ENCODE measurements at regions of chr10 and their contacts with region 1.

Region 1: GRCh38 chr10:35379226-35380137 is 43.2 kb downstream of the CCNY start:
- DNase-seq: peak; percentile 90
- ATAC-seq: peak; percentile 95
- H3K4me3 ChIP-seq: peak overlapping the region in 4 of 5 experiments; percentile 16 to 42 (median 22)
- H3K4me3 Mint-ChIP-seq: peak overlapping the region; percentile 79
- H3K27ac ChIP-seq: peak overlapping the region; percentile 73 to 84
- H3K27ac Mint-ChIP-seq: peak overlapping the region; percentile 91
- H3K4me1 ChIP-seq: peaks cover 32 to 35% of the 10 kb centered on the region in 2 donors
- H3K4me1 Mint-ChIP-seq: peaks cover 65% of the 10 kb centered on the region
- H3K27me3 ChIP-seq: no peaks in the 10 kb centered on the region
- H3K27me3 Mint-ChIP-seq: no peaks in the 10 kb centered on the region
- CTCF ChIP-seq: peak; percentile 73

Region 2: GRCh38 chr10:35090162-35090954 is 289.1 kb before region 1 on chr10 and contains the start of gene CUL2:
- CTCF ChIA-PET with region 1: no interaction called
- POLR2A ChIA-PET with region 1: no interaction called
- intact Hi-C with region 1: loop called (anchors 1 kb)
- DNase-seq: peak; percentile 98
- ATAC-seq: peak; percentile 95
- H3K4me3 ChIP-seq: peak within 1 kb of the TSS; percentile 62 to 92 (median 80)
- H3K4me3 Mint-ChIP-seq: peak within 1 kb of the TSS; percentile 89
- H3K27ac ChIP-seq: peak within 1 kb of the TSS; percentile 95 to 98
- H3K27ac Mint-ChIP-seq: peak within 1 kb of the TSS; percentile 95
- H3K4me1 ChIP-seq: peaks cover 29 to 31% of the 10 kb centered on the region in 2 donors
- H3K4me1 Mint-ChIP-seq: peaks cover 50% of the 10 kb centered on the region
- H3K27me3 ChIP-seq: no peaks in the 10 kb centered on the region
- H3K27me3 Mint-ChIP-seq: no peaks in the 10 kb centered on the region
- CTCF ChIP-seq: no peak
- total RNA-seq, gene CUL2: 36.9 and 41.9 TPM in 2 replicates

Region 3: DNA sequence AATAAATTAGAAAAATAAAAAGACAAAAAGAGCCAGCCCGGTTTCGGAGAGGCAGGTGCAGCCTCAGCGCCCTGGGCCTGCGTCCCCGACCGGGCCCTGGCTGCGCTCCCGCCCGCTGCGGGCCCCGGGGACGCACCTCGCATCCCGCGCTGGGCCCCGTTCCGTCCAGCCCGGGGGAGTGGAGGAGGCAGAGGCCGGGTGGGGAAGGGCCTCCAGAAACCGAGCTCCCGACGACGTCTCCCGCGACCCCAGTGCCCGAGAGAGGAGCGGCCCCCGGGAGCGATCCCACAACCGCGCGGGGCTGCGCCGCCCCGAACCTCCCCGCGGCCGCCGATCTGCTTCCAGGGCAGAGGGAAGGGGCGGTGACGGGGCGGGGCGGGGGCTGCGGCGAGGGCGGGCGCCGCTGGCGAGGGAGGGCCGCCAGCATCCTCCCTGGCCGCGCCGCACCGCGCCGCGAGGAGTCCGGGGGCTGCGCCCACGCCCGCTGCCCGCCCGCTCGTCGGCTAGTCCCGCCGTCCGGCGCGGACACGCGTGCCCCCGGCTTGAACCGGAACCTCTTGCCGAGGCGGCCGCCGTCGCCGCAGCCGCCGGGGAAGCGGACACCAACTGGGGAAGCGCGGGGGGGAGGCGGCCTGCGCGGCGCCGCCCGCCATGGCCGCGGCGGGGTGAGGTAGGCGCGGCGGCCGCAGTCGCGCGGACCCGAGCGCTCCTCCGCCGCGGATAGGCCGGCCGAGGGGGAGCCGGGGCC is 43.2 kb before region 1 on chr10 and contains the start of gene CCNY:
- CTCF ChIA-PET with region 1: interaction called, 4 read pairs
- POLR2A ChIA-PET with region 1: no interaction called
- intact Hi-C with region 1: loop called (anchors 1 kb)
- DNase-seq: peak; percentile 83
- ATAC-seq: peak; percentile 87
- H3K4me3 ChIP-seq: peak within 1 kb of the TSS; percentile 50 to 90 (median 74)
- H3K4me3 Mint-ChIP-seq: peak within 1 kb of the TSS; percentile 87
- H3K27ac ChIP-seq: peak within 1 kb of the TSS; percentile 43 to 77
- H3K27ac Mint-ChIP-seq: peak within 1 kb of the TSS; percentile 82
- H3K4me1 ChIP-seq: peaks cover 34% of the 10 kb centered on the region in 2 donors
- H3K4me1 Mint-ChIP-seq: peaks cover 56% of the 10 kb centered on the region
- H3K27me3 ChIP-seq: no peaks in the 10 kb centered on the region
- H3K27me3 Mint-ChIP-seq: no peaks in the 10 kb centered on the region
- CTCF ChIP-seq: no peak
- total RNA-seq, gene CCNY: 61.7 and 64.9 TPM in 2 replicates

Region 4: DNA sequence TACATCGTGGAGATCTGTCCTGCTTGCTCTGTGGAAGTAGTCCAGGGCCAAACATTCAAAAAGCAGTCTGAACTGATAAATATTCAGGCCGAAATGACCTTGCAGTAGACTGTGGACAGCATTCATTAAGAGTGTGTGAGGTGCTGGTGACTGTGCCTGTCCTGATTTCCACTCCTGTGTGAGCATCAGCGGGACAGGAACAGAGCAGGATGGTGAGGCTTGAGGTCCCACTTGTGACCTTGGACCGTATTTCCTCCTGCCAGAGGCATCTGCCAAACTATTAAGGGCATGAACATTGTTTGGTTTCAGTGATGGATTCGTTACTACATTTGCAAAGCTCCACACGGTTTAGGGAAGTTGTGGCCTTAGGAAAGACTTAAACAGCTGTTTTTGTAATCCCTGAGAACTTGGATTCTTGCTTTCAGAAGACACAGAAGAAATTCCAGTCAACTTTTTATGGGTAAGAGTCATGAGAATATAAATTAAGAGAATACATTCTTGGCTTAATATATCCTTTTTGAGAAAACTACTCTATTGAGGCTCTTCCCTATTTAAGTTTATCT is 10.4 kb before region 1 on chr10:
- CTCF ChIA-PET with region 1: no interaction called
- POLR2A ChIA-PET with region 1: no interaction called
- intact Hi-C with region 1: no loop called
- DNase-seq: no peak
- ATAC-seq: no peak
- H3K4me3 ChIP-seq: no peak overlapping the region
- H3K4me3 Mint-ChIP-seq: no peak overlapping the region
- H3K27ac ChIP-seq: no peak overlapping the region
- H3K27ac Mint-ChIP-seq: peak overlapping the region; percentile 37
- H3K4me1 ChIP-seq: peaks cover 42 to 51% of the 10 kb centered on the region in 2 donors
- H3K4me1 Mint-ChIP-seq: peaks cover 78% of the 10 kb centered on the region
- H3K27me3 ChIP-seq: no peaks in the 10 kb centered on the region
- H3K27me3 Mint-ChIP-seq: no peaks in the 10 kb centered on the region
- CTCF ChIP-seq: no peak

Region 5: GRCh38 chr10:35563261-35563891 is 183.9 kb after region 1 on chr10:
- CTCF ChIA-PET with region 1: interaction called, 31 read pairs
- POLR2A ChIA-PET with region 1: no interaction called
- intact Hi-C with region 1: loop called (anchors 1 kb)
- DNase-seq: peak; percentile 66
- ATAC-seq: peak; percentile 54
- H3K4me3 ChIP-seq: no peak overlapping the region
- H3K4me3 Mint-ChIP-seq: no peak overlapping the region
- H3K27ac ChIP-seq: no peak overlapping the region
- H3K27ac Mint-ChIP-seq: no peak overlapping the region
- H3K4me1 ChIP-seq: peaks cover 12 to 20% of the 10 kb centered on the region in 2 donors
- H3K4me1 Mint-ChIP-seq: peaks cover 19% of the 10 kb centered on the region
- H3K27me3 ChIP-seq: no peaks in the 10 kb centered on the region
- H3K27me3 Mint-ChIP-seq: no peaks in the 10 kb centered on the region
- CTCF ChIP-seq: peak; percentile 98

Region 6: DNA sequence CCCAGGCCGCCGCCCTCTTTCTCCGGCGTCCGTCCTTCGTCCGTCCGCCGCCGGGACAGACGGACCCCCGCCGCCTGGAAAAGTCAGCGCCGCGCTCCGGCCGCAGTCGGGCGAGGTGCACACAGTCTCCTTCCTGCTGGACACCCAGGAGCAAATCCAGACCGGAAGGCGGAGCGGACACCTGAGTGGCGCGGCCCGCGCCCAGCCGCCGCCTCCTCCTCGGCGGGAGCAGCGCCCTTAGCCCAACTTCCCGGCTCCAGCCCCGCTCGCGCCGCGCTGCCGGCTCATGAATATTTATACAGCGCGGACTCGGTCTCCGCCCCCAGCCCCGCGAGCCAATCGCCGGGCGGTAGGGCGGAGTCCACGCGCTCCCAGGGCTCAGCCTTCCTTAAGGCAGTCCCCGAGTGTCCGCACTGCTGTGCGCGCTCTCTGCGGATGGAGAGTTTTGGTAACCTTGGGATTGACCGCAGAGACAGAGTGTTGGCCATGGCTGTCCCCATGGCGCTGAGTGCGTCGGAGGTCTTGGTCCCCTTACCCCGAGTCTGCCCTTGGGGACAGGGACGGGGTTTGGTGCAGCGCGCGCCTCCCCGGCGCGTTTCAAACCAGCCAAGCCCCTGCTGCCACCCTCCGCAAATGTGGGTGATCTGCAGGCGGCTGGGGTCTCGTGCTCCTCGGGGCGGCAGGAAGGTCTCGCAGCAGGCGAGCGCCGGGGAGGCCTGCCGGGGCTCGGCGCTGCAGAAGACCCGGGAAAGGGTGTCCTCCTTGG is 262.7 kb after region 1 on chr10 and contains the start of gene FZD8:
- CTCF ChIA-PET with region 1: no interaction called
- POLR2A ChIA-PET with region 1: no interaction called
- intact Hi-C with region 1: loop called (anchors 1 kb)
- DNase-seq: peak; percentile 86
- ATAC-seq: peak; percentile 89
- H3K4me3 ChIP-seq: peak within 1 kb of the TSS; percentile 48 to 74 (median 63)
- H3K4me3 Mint-ChIP-seq: peak within 1 kb of the TSS; percentile 94
- H3K27ac ChIP-seq: no peak within 1 kb of the TSS
- H3K27ac Mint-ChIP-seq: peak within 1 kb of the TSS; percentile 47
- H3K4me1 ChIP-seq: peaks cover 22 to 29% of the 10 kb centered on the region in 2 donors
- H3K4me1 Mint-ChIP-seq: peaks cover 32% of the 10 kb centered on the region
- H3K27me3 ChIP-seq: peaks cover 0 to 43% (median 23%) of the 10 kb centered on the region in 4 experiments
- H3K27me3 Mint-ChIP-seq: peaks cover 35% of the 10 kb centered on the region
- CTCF ChIP-seq: no peak
- total RNA-seq, gene FZD8: 1.7 and 1.9 TPM in 2 replicates

Region 7: GRCh38 chr10:36880898-36881297 is 1501.4 kb after region 1 on chr10:
- CTCF ChIA-PET with region 1: interaction called, 3 read pairs
- POLR2A ChIA-PET with region 1: no interaction called
- intact Hi-C with region 1: loop called (anchors 5 kb)
- DNase-seq: peak; percentile 23
- ATAC-seq: no peak
- H3K4me3 ChIP-seq: no peak overlapping the region
- H3K4me3 Mint-ChIP-seq: no peak overlapping the region
- H3K27ac ChIP-seq: no peak overlapping the region
- H3K27ac Mint-ChIP-seq: no peak overlapping the region
- H3K4me1 ChIP-seq: no peaks in the 10 kb centered on the region
- H3K4me1 Mint-ChIP-seq: no peaks in the 10 kb centered on the region
- H3K27me3 ChIP-seq: no peaks in the 10 kb centered on the region
- H3K27me3 Mint-ChIP-seq: peaks cover 8% of the 10 kb centered on the region
- CTCF ChIP-seq: peak; percentile 60